Ovary (tissue), 10 donors: ENCODE measurements at regions of chr19 and their contacts with region 1.

Region 1: DNA sequence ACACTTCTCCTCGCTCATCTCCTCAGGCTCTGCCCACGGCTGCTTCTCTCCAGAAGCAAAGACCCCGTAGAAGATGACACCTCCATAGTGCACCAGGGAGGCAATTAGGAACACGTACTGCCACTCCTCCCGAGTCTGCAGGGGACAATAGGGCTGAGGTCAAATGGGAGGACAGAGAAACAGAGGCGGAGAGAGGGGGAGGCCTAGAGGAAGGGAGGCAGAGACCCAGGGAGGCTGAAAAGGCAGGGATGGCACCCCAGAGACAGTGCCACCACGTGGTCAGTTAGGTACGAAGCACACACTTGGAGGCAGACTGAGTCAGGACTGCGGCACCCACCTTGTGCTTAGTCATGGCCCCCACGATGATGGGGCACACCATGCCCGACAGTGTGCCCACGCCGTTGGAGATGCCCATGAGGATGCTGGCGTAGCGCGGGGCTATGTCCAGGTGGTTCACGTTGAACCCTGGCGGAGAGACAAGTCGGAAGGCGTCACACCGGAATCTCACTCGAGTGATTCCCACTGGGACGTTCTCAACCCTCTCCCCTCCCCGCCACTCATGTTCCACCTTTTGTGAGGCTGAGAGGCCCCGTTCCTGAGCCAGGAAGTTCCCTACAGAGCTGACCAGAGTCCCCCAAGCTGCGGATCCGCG is 5.6 kb downstream of the GFY start:
- DNase-seq: no peak
- H3K4me3 ChIP-seq: no peak overlapping the region
- H3K27ac ChIP-seq: no peak overlapping the region
- H3K4me1 ChIP-seq: peaks cover 1% of the 10 kb centered on the region
- H3K27me3 ChIP-seq: peaks cover 8% of the 10 kb centered on the region
- CTCF ChIP-seq: no peak
- EP300 ChIP-seq: no peak
- POLR2A ChIP-seq: no peak

Region 2: GRCh38 chr19:49355909-49356353 is 74.9 kb before region 1 on chr19:
- intact Hi-C with region 1: no loop called
- DNase-seq: no peak
- H3K4me3 ChIP-seq: no peak overlapping the region
- H3K27ac ChIP-seq: peak overlapping the region in 1 of 2 donors; percentile 2
- H3K4me1 ChIP-seq: peaks cover 3% of the 10 kb centered on the region
- H3K27me3 ChIP-seq: no peaks in the 10 kb centered on the region
- CTCF ChIP-seq: no peak
- EP300 ChIP-seq: no peak
- POLR2A ChIP-seq: no peak

Region 3: DNA sequence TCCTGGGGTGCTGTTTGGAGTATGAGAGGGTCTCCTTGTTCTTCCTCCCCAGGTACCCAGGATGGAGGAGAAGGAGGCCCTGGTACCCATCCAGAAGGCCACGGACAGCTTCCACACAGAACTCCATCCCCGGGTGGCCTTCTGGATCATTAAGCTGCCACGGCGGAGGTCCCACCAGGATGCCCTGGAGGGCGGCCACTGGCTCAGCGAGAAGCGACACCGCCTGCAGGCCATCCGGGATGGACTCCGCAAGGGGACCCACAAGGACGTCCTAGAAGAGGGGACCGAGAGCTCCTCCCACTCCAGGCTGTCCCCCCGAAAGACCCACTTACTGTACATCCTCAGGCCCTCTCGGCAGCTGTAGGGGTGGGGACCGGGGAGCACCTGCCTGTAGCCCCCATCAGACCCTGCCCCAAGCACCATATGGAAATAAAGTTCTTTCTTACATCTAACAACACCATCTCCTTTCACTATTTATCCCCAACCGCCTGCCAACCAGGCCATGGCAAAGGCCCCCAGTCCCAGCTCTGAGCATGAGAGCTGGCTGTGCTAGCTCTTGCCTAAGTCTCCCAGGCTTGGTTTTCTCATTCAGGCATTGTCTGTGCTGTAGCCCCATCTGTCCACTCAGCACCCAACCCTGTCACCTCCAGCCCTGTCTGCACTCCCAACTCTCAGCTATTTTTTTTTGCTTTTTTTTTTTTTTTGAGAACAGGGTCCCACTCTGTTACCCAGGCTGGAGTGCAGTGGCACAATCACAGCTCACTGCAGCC is 56.0 kb before region 1 on chr19:
- intact Hi-C with region 1: loop called in 1 of 4 experiments (anchors 10 kb)
- DNase-seq: no peak
- H3K4me3 ChIP-seq: no peak overlapping the region
- H3K27ac ChIP-seq: no peak overlapping the region
- H3K4me1 ChIP-seq: no peaks in the 10 kb centered on the region
- H3K27me3 ChIP-seq: no peaks in the 10 kb centered on the region
- CTCF ChIP-seq: no peak
- EP300 ChIP-seq: no peak
- POLR2A ChIP-seq: no peak

Region 4: DNA sequence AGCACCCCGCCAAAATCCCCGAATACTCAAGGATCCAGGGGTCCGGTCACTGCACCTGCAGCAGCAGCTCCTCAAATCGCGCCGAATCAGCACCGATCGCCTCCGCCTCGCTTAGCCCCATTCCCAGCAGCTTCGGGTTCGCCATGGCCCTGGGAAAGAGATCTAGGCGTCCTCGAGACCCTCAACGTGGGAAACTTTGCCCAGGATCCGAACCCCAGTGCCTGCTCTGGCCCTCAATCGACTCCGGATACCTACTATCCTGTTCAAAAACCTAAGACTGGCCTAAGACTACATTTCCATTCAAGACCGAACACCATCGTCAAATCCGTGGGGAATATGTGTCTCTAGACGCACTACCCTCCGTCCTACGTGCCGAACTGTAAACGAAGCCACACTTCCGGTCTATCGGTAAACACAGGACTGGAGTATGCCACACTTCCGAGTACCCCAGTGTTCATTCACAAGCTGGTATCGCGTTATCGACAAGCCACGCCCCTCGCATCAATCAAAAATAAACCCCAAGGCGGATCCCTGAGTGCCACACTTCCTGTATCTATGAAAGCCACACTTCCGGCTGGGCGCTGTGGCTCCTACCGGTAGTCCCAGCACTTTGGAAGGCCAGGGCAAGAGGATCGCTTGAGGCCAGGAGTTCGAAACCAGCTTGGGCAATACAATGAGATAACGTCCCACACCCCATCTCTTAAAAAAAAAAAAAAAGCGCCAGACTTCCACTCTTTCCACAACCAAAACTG is 20.8 kb after region 1 on chr19 and contains the start of gene PIH1D1:
- intact Hi-C with region 1: no loop called
- DNase-seq: peak; percentile 94 to 97 (median 95)
- H3K4me3 ChIP-seq: peak within 1 kb of the TSS; percentile 78
- H3K27ac ChIP-seq: peak within 1 kb of the TSS; percentile 86 to 95
- H3K4me1 ChIP-seq: no peaks in the 10 kb centered on the region
- H3K27me3 ChIP-seq: no peaks in the 10 kb centered on the region
- CTCF ChIP-seq: no peak
- EP300 ChIP-seq: no peak
- POLR2A ChIP-seq: peak; percentile 32
- total RNA-seq, gene PIH1D1: 42.6 to 69.4 (median 58.5) TPM

Region 5: DNA sequence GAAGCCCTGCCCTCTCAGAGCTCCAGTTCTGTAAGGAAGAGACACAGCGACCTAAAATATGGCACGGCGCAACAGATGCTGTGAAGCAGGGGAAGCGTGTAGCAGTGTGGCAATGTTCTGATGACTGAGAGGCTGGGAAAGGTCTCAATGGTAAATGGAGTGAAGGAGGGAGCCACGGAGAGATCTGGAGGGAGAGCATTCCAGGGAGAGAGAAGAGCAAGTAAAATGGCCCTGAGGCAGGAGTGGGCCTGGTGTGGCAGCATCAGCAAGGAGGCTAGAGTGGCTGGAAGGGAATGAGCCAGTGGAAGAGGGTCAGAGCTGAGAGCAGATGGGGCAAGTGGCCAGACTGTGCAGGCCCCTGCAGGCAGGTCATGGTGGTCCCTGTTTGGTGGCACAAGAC is 113.3 kb after region 1 on chr19:
- intact Hi-C with region 1: no loop called
- DNase-seq: no peak
- H3K4me3 ChIP-seq: no peak overlapping the region
- H3K27ac ChIP-seq: no peak overlapping the region
- H3K4me1 ChIP-seq: no peaks in the 10 kb centered on the region
- H3K27me3 ChIP-seq: no peaks in the 10 kb centered on the region
- CTCF ChIP-seq: no peak
- EP300 ChIP-seq: no peak
- POLR2A ChIP-seq: no peak